ENCODE measurements at regions of chr2 and their contacts with region 1.

Region 1: GRCh38 chr2:74529357-74530238 is at the starts of genes AUP1 and HTRA2:
- DNase-seq: peak; percentile 99
- ATAC-seq: peak; percentile 95 to 97 (median 96)
- H3K4me3 ChIP-seq: peak within 1 kb of the TSS; percentile 85
- H3K27ac ChIP-seq: peak within 1 kb of the TSS; percentile 93
- H3K4me1 ChIP-seq: peaks cover 24% of the 10 kb centered on the region
- H3K27me3 ChIP-seq: no peaks in the 10 kb centered on the region
- CTCF ChIP-seq: no peak
- total RNA-seq, gene AUP1: 56.0 to 94.7 (median 84.6) TPM
- total RNA-seq, gene HTRA2: 23.0 to 30.9 (median 27.2) TPM

Region 2: GRCh38 chr2:74454654-74455511 is 74.7 kb before region 1 on chr2 and contains the start of gene INO80B:
- intact Hi-C with region 1: loop called in 1 of 2 experiments (anchors 2 kb)
- DNase-seq: peak; percentile 93 to 96
- ATAC-seq: peak; percentile 73 to 80 (median 76)
- H3K4me3 ChIP-seq: peak within 1 kb of the TSS; percentile 86
- H3K27ac ChIP-seq: peak within 1 kb of the TSS; percentile 81
- H3K4me1 ChIP-seq: peaks cover 26% of the 10 kb centered on the region
- H3K27me3 ChIP-seq: no peaks in the 10 kb centered on the region
- CTCF ChIP-seq: no peak
- total RNA-seq, gene INO80B: 23.6 to 39.0 (median 28.6) TPM

Region 3: DNA sequence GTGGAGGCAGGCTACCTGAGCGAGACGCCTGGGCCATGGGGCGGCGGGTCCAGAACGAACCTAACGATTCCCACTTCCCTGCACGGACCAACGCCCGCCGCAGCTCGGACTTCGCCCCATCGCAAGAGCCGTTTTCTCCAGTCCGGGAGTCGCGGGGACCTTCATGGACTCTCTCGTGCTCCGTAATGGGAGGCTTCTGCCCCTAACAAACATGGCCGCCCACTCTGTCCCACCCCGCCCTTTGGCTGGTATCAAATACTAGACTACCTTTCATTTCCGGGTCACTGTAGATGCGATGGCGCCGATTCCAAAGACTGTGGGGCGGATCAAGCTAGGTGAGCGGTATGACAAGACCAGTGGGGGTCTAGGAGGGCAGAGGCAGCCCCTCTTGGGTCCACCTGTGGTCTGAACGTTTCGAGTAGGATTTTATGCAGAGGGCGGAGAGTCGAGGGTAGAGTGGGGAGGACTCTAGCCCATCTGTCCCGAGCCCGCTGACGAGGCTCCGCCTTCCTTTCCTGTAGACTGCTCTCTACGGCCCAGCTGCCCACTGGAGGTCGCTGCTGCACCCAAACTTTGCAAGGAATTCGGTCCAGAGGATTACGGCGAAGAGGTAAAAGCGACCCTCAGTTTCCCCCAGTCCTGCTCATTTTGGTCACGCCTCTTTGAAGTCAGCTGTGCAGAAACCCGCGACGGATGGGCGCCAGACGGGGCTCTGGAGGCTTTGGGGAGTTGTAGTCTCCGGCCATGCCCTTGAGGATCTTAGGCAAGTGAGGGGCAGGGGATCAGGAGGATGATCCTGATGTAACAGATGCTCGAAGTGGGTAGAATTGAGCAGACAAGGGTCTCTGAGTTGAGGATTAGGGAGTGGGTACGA is 46.6 kb before region 1 on chr2 and contains the starts of genes CCDC142 and TTC31:
- intact Hi-C with region 1: loop called (anchors 2 kb)
- DNase-seq: peak; percentile 95 to 97
- ATAC-seq: peak; percentile 98 to 99 (median 99)
- H3K4me3 ChIP-seq: peak within 1 kb of the TSS; percentile 98
- H3K27ac ChIP-seq: peak within 1 kb of the TSS; percentile 91
- H3K4me1 ChIP-seq: peaks cover 22% of the 10 kb centered on the region
- H3K27me3 ChIP-seq: no peaks in the 10 kb centered on the region
- CTCF ChIP-seq: peak; percentile 79
- total RNA-seq, gene CCDC142: 2.7 to 8.3 (median 4.5) TPM
- total RNA-seq, gene TTC31: 5.4 to 10.1 (median 8.4) TPM

Region 4: GRCh38 chr2:74507926-74508520 is 21.6 kb before region 1 on chr2:
- intact Hi-C with region 1: loop called (anchors 2 kb)
- DNase-seq: no peak
- ATAC-seq: peak in 1 of 4 donors; percentile 14
- H3K4me3 ChIP-seq: peak overlapping the region; percentile 96
- H3K27ac ChIP-seq: peak overlapping the region; percentile 100
- H3K4me1 ChIP-seq: peaks cover 13% of the 10 kb centered on the region
- H3K27me3 ChIP-seq: peaks cover 0 to 68% (median 10%) of the 10 kb centered on the region in 3 donors
- CTCF ChIP-seq: no peak

Region 5: GRCh38 chr2:75627895-75628504 is 1098.4 kb after region 1 on chr2:
- intact Hi-C with region 1: loop called in 1 of 2 experiments (anchors 5 kb)
- DNase-seq: peak; percentile 59 to 82
- ATAC-seq: peak; percentile 71 to 86 (median 76)
- H3K4me3 ChIP-seq: no peak overlapping the region
- H3K27ac ChIP-seq: no peak overlapping the region
- H3K4me1 ChIP-seq: no peaks in the 10 kb centered on the region
- H3K27me3 ChIP-seq: no peaks in the 10 kb centered on the region
- CTCF ChIP-seq: peak; percentile 93